Activated CD8-positive, alpha-beta T cell treated with anti-CD3 and anti-CD28 coated beads, Interleukin-2, amount 10 ng/mL, durations not matched to agents 7 days and 5 days (primary cell): ENCODE measurements at regions of chr12 and their contacts with region 1.

Region 1: GRCh38 chr12:123713398-123713797 is 1.2 kb downstream of the ATP6V0A2 start:
- DNase-seq: peak; percentile 27
- ATAC-seq: no peak
- H3K4me3 Mint-ChIP-seq: peak overlapping the region; percentile 81
- H3K27ac Mint-ChIP-seq: peak overlapping the region; percentile 72
- H3K4me1 Mint-ChIP-seq: peaks cover 35% of the 10 kb centered on the region
- H3K27me3 Mint-ChIP-seq: no peaks in the 10 kb centered on the region

Region 2: GRCh38 chr12:123633379-123634141 is 79.8 kb before region 1 on chr12 and contains the starts of genes EIF2B1 and GTF2H3:
- CTCF ChIA-PET with region 1: interaction called, 3 read pairs
- POLR2A ChIA-PET with region 1: interaction called, 15 read pairs
- DNase-seq: peak; percentile 99
- ATAC-seq: peak; percentile 97
- H3K4me3 Mint-ChIP-seq: peak within 1 kb of the TSS; percentile 94
- H3K27ac Mint-ChIP-seq: peak within 1 kb of the TSS; percentile 96
- H3K4me1 Mint-ChIP-seq: peaks cover 29% of the 10 kb centered on the region
- H3K27me3 Mint-ChIP-seq: no peaks in the 10 kb centered on the region
- total RNA-seq, gene EIF2B1: 70.2 to 73.6 TPM
- total RNA-seq, gene GTF2H3: 42.9 to 47.0 TPM

Region 3: DNA sequence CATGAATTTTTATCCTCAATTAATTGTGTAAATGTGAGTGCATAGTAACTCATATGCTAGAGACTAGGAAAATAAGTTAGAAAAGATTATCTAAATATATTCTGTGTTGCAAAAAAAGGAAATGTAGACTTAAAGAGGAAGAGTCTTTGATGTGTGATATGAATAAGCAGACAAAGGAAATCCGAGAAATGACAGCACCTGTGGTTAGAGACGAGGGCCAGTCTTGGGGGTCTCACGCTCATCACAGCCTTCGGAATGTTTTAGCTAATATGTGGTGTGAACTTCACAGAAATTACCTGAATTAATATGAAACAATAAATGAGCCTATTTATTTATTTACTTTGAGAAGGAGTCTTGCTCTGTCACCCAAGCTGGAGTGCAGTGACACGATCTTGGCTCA is 10.4 kb after region 1 on chr12:
- CTCF ChIA-PET with region 1: interaction called, 21 read pairs
- POLR2A ChIA-PET with region 1: interaction called, 7 read pairs
- DNase-seq: no peak
- ATAC-seq: peak; percentile 57
- H3K4me3 Mint-ChIP-seq: no peak overlapping the region
- H3K27ac Mint-ChIP-seq: peak overlapping the region; percentile 64
- H3K4me1 Mint-ChIP-seq: peaks cover 37% of the 10 kb centered on the region
- H3K27me3 Mint-ChIP-seq: no peaks in the 10 kb centered on the region

Region 4: DNA sequence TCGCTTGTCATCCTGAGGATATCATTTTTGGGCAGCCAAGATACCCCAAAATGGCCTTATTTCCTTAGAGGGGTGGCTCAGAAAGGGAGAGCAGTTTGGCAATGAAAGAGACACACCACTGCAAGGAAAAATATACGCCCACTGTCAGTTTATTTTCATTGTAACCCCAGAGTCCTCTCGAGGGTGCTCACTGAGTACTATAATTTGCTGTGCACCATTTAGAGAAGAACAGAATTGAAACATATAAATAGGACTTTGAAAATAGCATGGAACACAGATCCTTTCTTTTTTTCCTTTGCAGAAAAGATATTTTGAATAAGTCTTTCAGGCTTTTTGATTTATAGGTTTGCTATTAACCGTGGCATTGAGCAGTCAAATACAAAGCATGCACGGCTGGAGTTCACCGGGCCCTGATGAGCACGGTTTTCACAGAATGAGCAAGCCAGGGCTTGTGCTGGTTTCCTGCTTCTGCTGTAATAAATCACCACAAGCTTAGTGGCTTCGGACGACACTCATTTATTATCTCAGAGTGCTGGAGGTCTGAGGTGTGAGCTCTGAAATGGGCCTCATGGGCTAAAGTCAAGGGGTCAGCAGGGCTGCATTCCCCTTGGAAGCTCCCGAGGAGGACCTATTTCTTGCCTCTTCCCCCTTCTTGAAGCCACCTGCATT is 411.9 kb after region 1 on chr12:
- CTCF ChIA-PET with region 1: no interaction called
- POLR2A ChIA-PET with region 1: no interaction called
- DNase-seq: no peak
- ATAC-seq: no peak
- H3K4me3 Mint-ChIP-seq: no peak overlapping the region
- H3K27ac Mint-ChIP-seq: no peak overlapping the region
- H3K4me1 Mint-ChIP-seq: peaks cover 7% of the 10 kb centered on the region
- H3K27me3 Mint-ChIP-seq: peaks cover 3% of the 10 kb centered on the region